Transverse colon (tissue), 4 donors: ENCODE measurements at regions of chr11 and their contacts with region 1.

Region 1: GRCh38 chr11:88246696-88247095 is 71.5 kb upstream of the RAB38 start:
- DNase-seq: no peak
- H3K4me3 ChIP-seq: no peak overlapping the region
- H3K27ac ChIP-seq: no peak overlapping the region
- H3K4me1 ChIP-seq: no peaks in the 10 kb centered on the region
- H3K27me3 ChIP-seq: no peaks in the 10 kb centered on the region
- CTCF ChIP-seq: no peak
- EP300 ChIP-seq: no peak
- POLR2A ChIP-seq: no peak

Region 2: GRCh38 chr11:87743007-87743406 is 503.7 kb before region 1 on chr11:
- in situ Hi-C with region 1: no loop called
- intact Hi-C with region 1: loop called (anchors 5 kb)
- DNase-seq: no peak
- H3K4me3 ChIP-seq: no peak overlapping the region
- H3K27ac ChIP-seq: no peak overlapping the region
- H3K4me1 ChIP-seq: no peaks in the 10 kb centered on the region
- H3K27me3 ChIP-seq: no peaks in the 10 kb centered on the region
- CTCF ChIP-seq: no peak
- EP300 ChIP-seq: no peak
- POLR2A ChIP-seq: no peak

Region 3: GRCh38 chr11:87954476-87954875 is 292.2 kb before region 1 on chr11:
- in situ Hi-C with region 1: no loop called
- intact Hi-C with region 1: no loop called
- DNase-seq: no peak
- H3K4me3 ChIP-seq: no peak overlapping the region
- H3K27ac ChIP-seq: no peak overlapping the region
- H3K4me1 ChIP-seq: no peaks in the 10 kb centered on the region
- H3K27me3 ChIP-seq: no peaks in the 10 kb centered on the region
- CTCF ChIP-seq: no peak
- EP300 ChIP-seq: no peak
- POLR2A ChIP-seq: no peak

Region 4: DNA sequence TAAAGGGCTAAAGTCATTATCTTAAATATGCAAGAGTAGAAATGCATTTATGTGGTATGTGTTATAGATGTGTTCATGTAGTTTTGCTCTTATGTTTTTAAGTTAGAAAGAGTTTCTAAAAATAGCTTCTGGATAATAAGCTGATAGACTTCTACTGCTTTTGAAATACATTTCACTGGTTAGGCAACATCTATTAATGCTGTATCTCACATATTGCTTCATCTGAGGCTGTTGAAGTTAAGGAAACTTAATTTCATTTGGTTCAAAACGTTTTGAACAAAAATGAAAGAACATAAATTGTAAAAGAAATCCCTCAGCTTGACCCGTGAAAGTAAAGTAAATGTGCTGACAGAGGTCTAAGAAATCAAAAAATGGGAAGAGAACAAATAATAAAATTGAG is 254.8 kb after region 1 on chr11:
- in situ Hi-C with region 1: no loop called
- intact Hi-C with region 1: no loop called
- DNase-seq: no peak
- H3K4me3 ChIP-seq: no peak overlapping the region
- H3K27ac ChIP-seq: no peak overlapping the region
- H3K4me1 ChIP-seq: no peaks in the 10 kb centered on the region
- H3K27me3 ChIP-seq: peaks cover 3% of the 10 kb centered on the region
- CTCF ChIP-seq: no peak
- EP300 ChIP-seq: no peak
- POLR2A ChIP-seq: no peak